ENCODE measurements at regions of chr12 and their contacts with region 1.

Region 1: DNA sequence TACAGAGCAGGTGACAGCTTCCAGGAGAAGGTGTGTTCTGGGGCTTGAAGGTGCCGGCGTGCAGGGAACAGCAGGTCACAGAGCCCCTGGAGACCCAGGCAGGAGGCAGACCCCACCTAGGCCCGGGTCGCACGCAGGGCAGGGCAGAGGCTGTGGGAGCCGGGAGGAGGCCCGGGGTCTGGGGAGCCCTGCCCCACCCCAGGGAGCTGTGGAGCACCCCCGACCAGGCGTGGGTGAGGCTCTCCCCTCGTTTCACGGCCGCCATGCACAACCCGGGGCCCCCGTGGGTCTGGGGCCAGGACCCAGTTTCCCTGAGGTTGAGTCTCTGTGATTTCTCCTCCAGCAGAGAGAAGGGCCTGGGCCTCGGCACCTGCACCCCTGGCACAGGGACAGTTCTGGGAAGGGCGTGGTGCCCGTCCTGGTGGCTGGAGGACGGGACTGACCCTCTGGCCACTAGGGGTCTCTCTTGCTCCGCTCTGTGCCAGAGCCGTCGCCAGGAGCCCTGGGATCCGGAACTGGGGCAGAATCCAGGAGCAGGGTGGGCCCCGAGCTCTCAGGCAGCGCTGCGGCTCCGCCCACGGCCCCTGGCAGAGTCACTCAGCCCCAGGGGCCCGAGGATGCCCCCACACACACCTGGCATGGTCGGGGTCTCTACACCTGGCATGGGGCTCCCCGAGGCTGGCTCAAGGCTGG is 75.2 kb upstream of the FBRSL1 start:
- DNase-seq: peak; percentile 54 to 82 (median 68)
- ATAC-seq: peak; percentile 92
- H3K4me3 ChIP-seq: no peak overlapping the region
- H3K4me3 Mint-ChIP-seq: peak overlapping the region in 4 of 10 donors; percentile 25 to 43 (median 35)
- H3K27ac ChIP-seq: no peak overlapping the region
- H3K27ac Mint-ChIP-seq: no peak overlapping the region
- H3K4me1 ChIP-seq: peaks cover 5 to 15% of the 10 kb centered on the region in 2 donors
- H3K4me1 Mint-ChIP-seq: peaks cover 0 to 5% (median 3%) of the 10 kb centered on the region in 7 donors
- H3K27me3 ChIP-seq: no peaks in the 10 kb centered on the region
- H3K27me3 Mint-ChIP-seq: peaks cover 0 to 9% (median 0%) of the 10 kb centered on the region in 5 donors

Region 2: DNA sequence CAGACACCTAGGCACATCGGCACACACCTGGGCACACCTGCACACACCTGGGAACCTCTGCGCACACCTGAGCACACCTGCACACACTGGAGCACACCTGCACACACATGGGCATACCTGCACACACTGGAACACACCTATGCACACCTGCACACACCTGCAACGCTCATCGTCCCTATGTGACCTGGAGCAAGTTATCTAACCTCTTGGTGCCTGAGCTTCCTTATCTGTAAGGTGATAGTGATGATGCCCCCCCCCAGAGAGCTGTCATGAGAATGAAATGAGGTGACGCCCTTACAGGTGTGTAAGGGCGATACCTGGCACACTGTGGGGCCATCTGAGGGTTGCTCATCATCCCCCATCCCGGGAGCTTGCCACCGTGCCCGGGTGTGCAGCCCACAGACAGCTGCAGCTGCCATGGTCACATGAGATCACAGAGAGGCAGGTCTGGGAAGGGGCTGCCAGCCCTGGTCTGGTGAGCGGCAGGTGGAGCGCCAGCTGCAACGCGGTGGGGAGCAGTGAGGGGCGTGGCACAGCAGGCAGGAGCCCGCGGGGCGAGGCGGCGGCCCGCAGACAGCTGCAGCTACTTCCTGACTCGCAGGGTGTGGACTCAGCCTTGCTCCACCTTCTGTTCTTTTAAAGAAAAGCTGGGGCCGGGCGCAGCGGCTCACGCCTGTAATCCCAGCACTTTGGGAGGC is 15.3 kb after region 1 on chr12:
- CTCF ChIA-PET with region 1: interaction called, 13 read pairs
- POLR2A ChIA-PET with region 1: no interaction called
- intact Hi-C with region 1: loop called in 1 of 2 experiments (anchors 1 kb)
- DNase-seq: peak; percentile 49 to 71 (median 65)
- ATAC-seq: peak; percentile 93
- H3K4me3 ChIP-seq: peak overlapping the region; percentile 48
- H3K4me3 Mint-ChIP-seq: peak overlapping the region; percentile 42 to 81 (median 77)
- H3K27ac ChIP-seq: no peak overlapping the region
- H3K27ac Mint-ChIP-seq: peak overlapping the region in 8 of 9 donors; percentile 17 to 83 (median 76)
- H3K4me1 ChIP-seq: peaks cover 11 to 33% of the 10 kb centered on the region in 2 donors
- H3K4me1 Mint-ChIP-seq: peaks cover 17 to 44% (median 34%) of the 10 kb centered on the region in 7 donors
- H3K27me3 ChIP-seq: no peaks in the 10 kb centered on the region
- H3K27me3 Mint-ChIP-seq: peaks cover 0 to 6% (median 0%) of the 10 kb centered on the region in 5 donors

Region 3: DNA sequence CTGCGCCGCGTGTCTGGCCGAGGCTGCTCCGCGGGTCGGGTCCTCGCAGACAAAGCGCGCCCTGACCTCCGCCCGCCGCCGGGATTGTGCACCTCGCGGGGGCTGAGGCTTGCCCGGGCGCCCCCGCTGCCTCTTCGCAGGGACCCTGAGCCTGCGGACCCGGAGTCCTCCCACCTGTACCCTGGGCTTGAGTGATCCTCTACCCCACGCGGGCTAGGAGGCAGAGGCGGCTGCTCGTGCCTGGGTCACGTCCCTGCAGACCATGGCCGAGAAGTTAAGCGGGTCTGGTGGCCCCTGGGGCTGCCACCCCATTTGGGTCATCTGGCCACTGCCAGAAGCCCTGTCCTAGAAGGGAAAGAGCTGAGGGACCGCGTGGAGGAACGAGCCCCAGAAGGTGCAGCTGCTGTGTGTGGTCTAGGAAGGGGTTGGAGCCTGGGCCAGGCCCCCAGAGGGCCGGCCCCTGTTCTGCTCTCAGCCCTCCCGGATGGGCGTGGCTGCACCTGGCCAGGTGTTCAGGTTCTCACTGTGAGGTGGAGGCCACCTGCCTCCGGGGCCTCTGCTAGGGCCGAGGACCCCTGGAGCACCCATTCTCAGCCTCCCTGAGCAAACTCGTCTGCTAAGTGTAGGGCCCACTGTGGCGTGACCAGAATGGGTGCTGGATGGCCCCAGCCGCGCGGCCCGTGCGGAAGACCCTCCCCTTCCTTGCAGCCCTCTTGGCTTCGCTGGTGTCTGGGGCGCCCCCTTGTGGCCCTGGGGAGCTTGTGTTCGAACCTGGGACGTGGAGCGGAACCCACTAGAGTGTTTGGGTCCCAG is 146.0 kb after region 1 on chr12:
- CTCF ChIA-PET with region 1: interaction called, 9 read pairs
- POLR2A ChIA-PET with region 1: no interaction called
- intact Hi-C with region 1: loop called (anchors 1 kb)
- DNase-seq: peak; percentile 47 to 82 (median 63)
- ATAC-seq: peak; percentile 64
- H3K4me3 ChIP-seq: peak overlapping the region; percentile 37
- H3K4me3 Mint-ChIP-seq: peak overlapping the region; percentile 41 to 80 (median 69)
- H3K27ac ChIP-seq: no peak overlapping the region
- H3K27ac Mint-ChIP-seq: no peak overlapping the region
- H3K4me1 ChIP-seq: peaks cover 7 to 25% of the 10 kb centered on the region in 2 donors
- H3K4me1 Mint-ChIP-seq: peaks cover 4 to 25% (median 17%) of the 10 kb centered on the region in 7 donors
- H3K27me3 ChIP-seq: no peaks in the 10 kb centered on the region
- H3K27me3 Mint-ChIP-seq: peaks cover 0 to 15% (median 8%) of the 10 kb centered on the region in 5 donors

Measured in naive thymus-derived CD4-positive, alpha-beta T cell (primary cell).